Heart left ventricle (tissue), 16 donors: ENCODE measurements at regions of chr3 and their contacts with region 1.

Region 1: GRCh38 chr3:139533781-139534443 is 5.6 kb downstream of the RBP1 start:
- DNase-seq: peak in 4 of 5 donors; percentile 36 to 53 (median 47)
- ATAC-seq: peak in 2 of 4 donors; percentile 23 to 48
- H3K4me3 ChIP-seq: no peak overlapping the region
- H3K27ac ChIP-seq: peak overlapping the region in 11 of 12 donors; percentile 42 to 80 (median 70)
- H3K4me1 ChIP-seq: peaks cover 11 to 60% (median 42%) of the 10 kb centered on the region in 12 donors
- H3K27me3 ChIP-seq: peaks cover 0 to 1% (median 0%) of the 10 kb centered on the region in 9 donors
- CTCF ChIP-seq: no peak
- POLR2A ChIP-seq: no peak

Region 2: GRCh38 chr3:139588450-139588849 is 54.5 kb after region 1 on chr3:
- intact Hi-C with region 1: no loop called
- DNase-seq: peak in 3 of 5 donors; percentile 32 to 43 (median 37)
- ATAC-seq: peak; percentile 65 to 78 (median 71)
- H3K4me3 ChIP-seq: no peak overlapping the region
- H3K27ac ChIP-seq: no peak overlapping the region
- H3K4me1 ChIP-seq: peaks cover 0 to 7% (median 0%) of the 10 kb centered on the region in 12 donors
- H3K27me3 ChIP-seq: no peaks in the 10 kb centered on the region
- CTCF ChIP-seq: peak in 9 of 12 donors; percentile 2 to 43 (median 24)
- POLR2A ChIP-seq: no peak

Region 3: GRCh38 chr3:139677388-139678155 is 143.7 kb after region 1 on chr3 and contains the start of gene NMNAT3:
- intact Hi-C with region 1: loop called in 1 of 10 experiments (anchors 10 kb)
- DNase-seq: peak; percentile 86 to 92 (median 88)
- ATAC-seq: peak; percentile 99 to 100 (median 100)
- H3K4me3 ChIP-seq: peak within 1 kb of the TSS; percentile 39 to 90 (median 74)
- H3K27ac ChIP-seq: peak within 1 kb of the TSS in 11 of 12 donors; percentile 6 to 84 (median 69)
- H3K4me1 ChIP-seq: peaks cover 0 to 17% (median 6%) of the 10 kb centered on the region in 12 donors
- H3K27me3 ChIP-seq: no peaks in the 10 kb centered on the region
- CTCF ChIP-seq: peak in 3 of 12 donors; percentile 16 to 32 (median 30)
- POLR2A ChIP-seq: peak in 1 of 2 donors; percentile 27
- total RNA-seq, gene NMNAT3: 6.5 to 15.4 (median 11.6) TPM

Region 4: GRCh38 chr3:139811331-139811730 is 277.4 kb after region 1 on chr3:
- intact Hi-C with region 1: no loop called
- DNase-seq: no peak
- ATAC-seq: no peak
- H3K4me3 ChIP-seq: no peak overlapping the region
- H3K27ac ChIP-seq: no peak overlapping the region
- H3K4me1 ChIP-seq: peaks cover 0 to 8% (median 0%) of the 10 kb centered on the region in 12 donors
- H3K27me3 ChIP-seq: peaks cover 0 to 7% (median 0%) of the 10 kb centered on the region in 9 donors
- CTCF ChIP-seq: no peak
- POLR2A ChIP-seq: no peak